Panc1 (cell line): ENCODE measurements at regions of chr1 and their contacts with region 1.

Region 1: GRCh38 chr1:36269408-36269838 is 36.7 kb upstream of the SH3D21 start:
- DNase-seq: no peak
- ATAC-seq: no peak
- H3K4me3 ChIP-seq: no peak overlapping the region
- H3K27ac ChIP-seq: no peak overlapping the region
- H3K4me1 ChIP-seq: no peaks in the 10 kb centered on the region
- H3K27me3 ChIP-seq: no peaks in the 10 kb centered on the region
- CTCF ChIP-seq: no peak

Region 2: DNA sequence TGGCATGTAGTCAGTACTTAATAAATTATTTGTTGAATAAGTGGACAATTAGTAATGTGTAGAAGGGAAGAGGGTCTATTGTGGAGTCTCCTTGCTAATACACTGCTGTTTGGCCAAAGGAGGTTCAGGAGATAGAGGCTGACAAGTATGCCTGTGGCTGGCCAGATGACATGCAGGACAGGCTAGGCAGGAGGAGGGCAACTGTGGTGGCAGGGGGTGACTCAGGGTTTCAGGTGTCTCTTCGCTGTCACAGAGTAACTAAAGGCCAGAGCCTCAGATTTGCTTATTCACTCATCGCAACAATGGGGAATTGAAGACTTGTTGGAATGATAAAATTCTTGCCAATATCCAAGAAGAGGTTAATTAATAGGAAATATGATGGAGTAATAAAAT is 12.1 kb before region 1 on chr1:
- CTCF ChIA-PET with region 1: interaction called, 5 read pairs
- POLR2A ChIA-PET with region 1: interaction called, 19 read pairs
- in situ Hi-C with region 1: no loop called
- intact Hi-C with region 1: no loop called
- DNase-seq: no peak
- ATAC-seq: no peak
- H3K4me3 ChIP-seq: no peak overlapping the region
- H3K27ac ChIP-seq: no peak overlapping the region
- H3K4me1 ChIP-seq: peaks cover 31% of the 10 kb centered on the region
- H3K27me3 ChIP-seq: no peaks in the 10 kb centered on the region
- CTCF ChIP-seq: no peak

Region 3: GRCh38 chr1:36297062-36297461 is 27.6 kb after region 1 on chr1:
- CTCF ChIA-PET with region 1: no interaction called
- POLR2A ChIA-PET with region 1: interaction called, 17 read pairs
- in situ Hi-C with region 1: no loop called
- intact Hi-C with region 1: no loop called
- DNase-seq: no peak
- ATAC-seq: no peak
- H3K4me3 ChIP-seq: no peak overlapping the region
- H3K27ac ChIP-seq: no peak overlapping the region
- H3K4me1 ChIP-seq: peaks cover 6% of the 10 kb centered on the region; the same call in 1 of the 2 replicates
- H3K27me3 ChIP-seq: no peaks in the 10 kb centered on the region
- CTCF ChIP-seq: no peak

Region 4: DNA sequence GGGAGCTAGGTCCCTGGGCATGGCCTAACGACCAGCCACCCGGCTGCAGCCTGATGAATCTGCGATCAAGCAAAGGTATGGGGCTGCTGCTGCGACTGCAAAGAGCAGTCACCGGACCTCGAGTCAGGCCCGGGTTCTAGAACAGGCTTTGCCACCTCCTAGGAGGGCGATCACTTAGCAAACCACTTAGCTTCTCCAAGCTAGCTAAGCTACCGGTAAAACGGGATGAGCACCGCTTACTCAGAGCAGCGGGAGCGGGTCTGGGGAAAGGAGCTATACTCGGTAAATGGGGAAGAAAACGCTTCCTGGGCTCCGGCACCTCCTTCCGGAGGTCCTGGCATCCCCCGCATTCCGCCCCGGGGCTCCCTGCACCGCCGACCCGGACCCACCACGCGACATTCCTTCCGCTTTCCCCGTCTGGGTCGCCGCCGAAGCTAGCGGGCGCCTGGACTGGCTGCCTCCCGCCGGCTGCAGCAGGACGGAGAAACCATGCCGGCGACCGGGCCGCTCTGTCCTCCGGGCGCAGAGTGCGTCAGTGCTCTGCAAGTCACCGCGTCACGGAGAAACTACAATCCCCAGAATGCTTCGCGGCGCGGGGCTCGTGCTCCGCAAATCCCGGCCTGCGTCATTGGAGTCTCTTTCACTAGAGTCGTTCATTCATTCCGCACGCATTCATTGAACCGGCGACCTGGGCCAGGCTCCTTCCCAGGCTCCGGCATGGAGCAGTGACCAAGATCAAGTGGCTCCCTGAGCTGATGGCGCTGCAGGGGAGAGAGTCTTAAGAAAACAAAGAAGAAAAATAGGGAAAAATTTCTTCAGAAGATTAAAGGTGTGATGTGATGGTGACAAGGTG is 128.2 kb after region 1 on chr1 and contains the start of gene LSM10:
- CTCF ChIA-PET with region 1: no interaction called
- POLR2A ChIA-PET with region 1: no interaction called
- in situ Hi-C with region 1: no loop called
- intact Hi-C with region 1: no loop called
- DNase-seq: peak; percentile 87
- ATAC-seq: peak; percentile 98
- H3K4me3 ChIP-seq: peak within 1 kb of the TSS; percentile 80 to 93
- H3K27ac ChIP-seq: peak within 1 kb of the TSS; percentile 79
- H3K4me1 ChIP-seq: no peaks in the 10 kb centered on the region
- H3K27me3 ChIP-seq: no peaks in the 10 kb centered on the region
- CTCF ChIP-seq: no peak
- total RNA-seq, gene LSM10: 53.7 TPM